GM12878 (cell line): ENCODE measurements at regions of chr9 and their contacts with region 1.

Region 1: DNA sequence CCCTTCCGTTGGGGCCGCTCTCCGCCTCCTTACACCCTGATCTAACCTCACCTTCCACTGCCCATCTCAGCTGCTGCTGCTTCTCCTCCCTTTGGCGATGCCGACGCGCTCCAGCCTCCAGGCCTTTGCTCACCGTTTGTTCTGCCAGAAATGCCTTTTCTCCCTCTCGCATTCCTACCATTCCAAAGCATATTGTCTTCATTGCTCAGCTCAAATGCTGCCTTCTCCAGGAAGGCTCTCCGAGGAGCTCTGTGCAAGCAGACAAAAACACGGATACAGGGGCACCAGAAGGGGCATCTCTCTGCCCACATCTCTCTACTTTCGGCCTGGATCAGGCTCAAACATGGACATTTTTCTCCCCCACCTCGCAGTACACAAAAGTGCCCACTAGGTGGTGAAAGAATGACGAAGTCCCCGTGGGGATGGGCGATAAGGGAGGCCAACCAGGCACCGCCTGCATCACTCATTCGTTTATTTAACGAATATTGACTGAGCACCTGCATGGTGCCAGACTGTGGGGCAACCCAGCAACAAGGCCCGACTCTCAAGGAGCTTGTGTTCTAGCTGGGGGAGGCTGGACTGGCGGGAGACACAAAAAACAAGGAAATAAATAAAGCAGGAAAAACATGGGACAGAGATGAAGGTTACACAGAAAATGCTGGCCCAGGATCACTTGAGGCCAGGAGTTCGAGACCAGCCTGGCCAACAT is 7.3 kb upstream of the GRHPR start:
- DNase-seq: no peak
- ATAC-seq: peak; percentile 50
- H3K4me3 ChIP-seq: no peak overlapping the region
- H3K27ac ChIP-seq: peak overlapping the region; percentile 45
- H3K4me1 ChIP-seq: peaks cover 46% of the 10 kb centered on the region
- H3K27me3 ChIP-seq: no peaks in the 10 kb centered on the region
- CTCF ChIP-seq: peak; percentile 82 to 89 (median 88)
- EP300 ChIP-seq: no peak
- POLR2A ChIP-seq: no peak
- RAD21 ChIP-seq: peak; percentile 80

Region 2: DNA sequence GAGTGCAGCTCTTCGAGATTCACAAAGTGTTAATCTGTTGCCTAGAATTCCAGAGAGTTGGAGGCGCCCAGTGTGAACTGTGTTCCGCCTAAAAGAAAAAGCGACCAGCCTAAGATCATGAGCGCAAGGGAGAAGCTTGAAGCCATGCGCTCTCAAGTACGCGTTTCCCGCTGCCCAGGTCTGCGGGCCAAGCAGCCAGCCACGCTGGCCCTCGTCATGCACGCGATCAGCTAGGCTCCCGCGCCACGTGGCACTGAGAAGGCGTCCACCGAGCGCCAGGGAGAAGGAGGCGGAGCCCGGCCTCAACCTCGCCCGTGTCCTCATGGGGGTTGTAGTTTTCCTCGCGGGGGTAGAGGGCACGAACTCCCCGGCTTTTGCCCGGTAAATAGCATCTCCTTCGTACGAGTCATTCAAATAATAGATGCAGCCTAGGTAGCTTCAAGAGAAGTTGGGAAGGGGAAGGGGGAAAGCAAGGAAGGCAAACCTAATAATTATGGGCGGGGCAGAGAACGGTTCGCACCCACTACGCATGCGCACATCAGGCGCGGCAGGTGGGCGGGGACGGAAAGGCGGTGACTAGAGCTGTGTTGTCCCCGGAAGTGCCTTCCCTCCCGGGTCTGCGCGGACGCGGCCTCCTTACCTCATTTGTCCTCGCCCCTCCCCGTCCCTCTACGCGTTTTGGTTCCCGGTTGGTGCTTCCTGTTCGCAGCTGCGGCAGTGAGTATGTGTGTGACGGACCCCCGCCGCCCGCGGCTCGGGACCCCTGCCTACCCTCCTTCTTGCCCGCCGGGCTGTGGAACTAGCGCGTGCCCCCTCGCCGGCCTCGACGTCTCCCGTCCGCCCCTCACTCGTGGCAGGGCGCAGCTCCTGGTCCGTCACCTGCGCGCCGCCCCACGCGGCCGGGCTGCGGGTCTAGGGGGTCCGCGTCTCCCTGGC is 295.0 kb before region 1 on chr9 and contains the start of gene ZCCHC7:
- CTCF ChIA-PET with region 1: no interaction called
- POLR2A ChIA-PET with region 1: no interaction called
- RAD21 ChIA-PET with region 1: interaction called, 10 read pairs
- SMC1A ChIA-PET with region 1: interaction called, 3 read pairs
- in situ Hi-C with region 1: no loop called
- intact Hi-C with region 1: no loop called
- DNase-seq: peak; percentile 89
- ATAC-seq: peak; percentile 94
- H3K4me3 ChIP-seq: peak within 1 kb of the TSS; percentile 93
- H3K27ac ChIP-seq: peak within 1 kb of the TSS; percentile 93
- H3K4me1 ChIP-seq: peaks cover 8% of the 10 kb centered on the region
- H3K27me3 ChIP-seq: no peaks in the 10 kb centered on the region
- CTCF ChIP-seq: no peak
- EP300 ChIP-seq: no peak
- POLR2A ChIP-seq: peak; percentile 92
- RAD21 ChIP-seq: no peak
- polyA plus RNA-seq, gene ZCCHC7: 58.6 to 60.8 TPM

Region 3: GRCh38 chr9:37324261-37324683 is 90.9 kb before region 1 on chr9:
- CTCF ChIA-PET with region 1: interaction called, 20 read pairs
- POLR2A ChIA-PET with region 1: interaction called, 3 read pairs
- RAD21 ChIA-PET with region 1: interaction called, 11 read pairs
- SMC1A ChIA-PET with region 1: interaction called, 16 read pairs
- in situ Hi-C with region 1: no loop called
- intact Hi-C with region 1: no loop called
- DNase-seq: peak; percentile 43
- ATAC-seq: peak; percentile 76
- H3K4me3 ChIP-seq: peak overlapping the region; percentile 18
- H3K27ac ChIP-seq: peak overlapping the region; percentile 93
- H3K4me1 ChIP-seq: peaks cover 30% of the 10 kb centered on the region
- H3K27me3 ChIP-seq: no peaks in the 10 kb centered on the region
- CTCF ChIP-seq: no peak
- EP300 ChIP-seq: no peak
- POLR2A ChIP-seq: 0 out of 2 replicates have a peak, but pooled peaks have one; percentile 48
- RAD21 ChIP-seq: no peak

Region 4: GRCh38 chr9:37382161-37382981 is 32.8 kb before region 1 on chr9:
- CTCF ChIA-PET with region 1: interaction called, 220 read pairs
- POLR2A ChIA-PET with region 1: interaction called, 212 read pairs
- RAD21 ChIA-PET with region 1: interaction called, 24 read pairs
- SMC1A ChIA-PET with region 1: interaction called, 10 read pairs
- in situ Hi-C with region 1: no loop called
- intact Hi-C with region 1: no loop called
- DNase-seq: peak; percentile 70
- ATAC-seq: peak; percentile 57
- H3K4me3 ChIP-seq: no peak overlapping the region
- H3K27ac ChIP-seq: peak overlapping the region; percentile 92
- H3K4me1 ChIP-seq: peaks cover 65% of the 10 kb centered on the region
- H3K27me3 ChIP-seq: no peaks in the 10 kb centered on the region
- CTCF ChIP-seq: no peak
- EP300 ChIP-seq: peak; percentile 75 to 80
- POLR2A ChIP-seq: no peak
- RAD21 ChIP-seq: peak; percentile 9; the same call in 1 of the 2 replicates

Region 5: DNA sequence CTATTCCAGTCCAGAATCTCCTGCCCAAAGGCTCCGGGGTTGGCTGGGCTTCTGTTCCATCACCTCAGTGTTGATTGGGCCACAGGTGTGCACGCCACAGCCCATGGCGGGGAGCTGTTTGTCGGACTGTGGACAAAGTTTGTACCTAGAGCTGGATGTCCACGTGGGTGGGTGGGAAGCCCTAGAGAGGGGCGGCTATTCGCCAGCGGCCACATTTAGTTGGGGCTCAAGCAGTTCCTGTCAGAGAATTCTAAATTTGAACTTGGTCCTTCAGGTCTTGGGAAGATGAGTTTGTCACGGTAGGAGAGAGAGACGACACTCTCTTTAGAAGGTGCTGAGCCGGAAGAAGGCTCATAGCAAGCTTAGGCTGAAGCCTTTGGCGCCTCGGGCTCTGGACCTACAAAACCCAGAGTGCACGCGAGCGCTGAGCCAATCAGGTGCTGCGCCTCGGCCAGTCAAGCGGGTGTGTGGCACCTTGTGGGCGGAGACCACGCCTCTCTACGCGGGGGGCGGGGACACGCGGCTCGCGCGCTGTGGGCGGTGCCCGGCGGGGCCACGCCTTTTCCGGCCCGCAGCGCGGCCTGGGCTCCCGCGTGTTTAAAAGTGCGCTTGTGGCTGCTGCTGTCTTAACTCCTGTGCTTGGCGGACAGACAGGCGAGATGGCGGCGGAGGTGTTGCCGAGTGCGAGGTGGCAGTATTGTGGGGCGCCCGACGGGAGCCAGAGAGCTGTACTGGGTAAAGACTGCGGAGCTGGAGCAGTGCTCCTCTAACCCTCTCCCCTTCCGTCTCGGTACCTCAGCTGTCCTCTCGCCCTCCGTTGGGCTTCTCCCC is 70.4 kb after region 1 on chr9 and contains the start of gene POLR1E:
- CTCF ChIA-PET with region 1: interaction called, 12 read pairs
- POLR2A ChIA-PET with region 1: interaction called, 4 read pairs
- RAD21 ChIA-PET with region 1: interaction called, 5 read pairs
- SMC1A ChIA-PET with region 1: interaction called, 5 read pairs
- in situ Hi-C with region 1: no loop called
- intact Hi-C with region 1: no loop called
- DNase-seq: peak; percentile 85
- ATAC-seq: peak; percentile 95
- H3K4me3 ChIP-seq: peak within 1 kb of the TSS; percentile 100
- H3K27ac ChIP-seq: peak within 1 kb of the TSS; percentile 71
- H3K4me1 ChIP-seq: peaks cover 14% of the 10 kb centered on the region
- H3K27me3 ChIP-seq: 0 out of 4 replicates have a peak, but pooled peaks cover 0 to 2% of the 10 kb centered on the region in 2 experiments
- CTCF ChIP-seq: no peak
- EP300 ChIP-seq: no peak; a peak in 1 of 4 replicates
- POLR2A ChIP-seq: peak; percentile 99
- RAD21 ChIP-seq: no peak
- polyA plus RNA-seq, gene POLR1E: 13.7 to 27.6 TPM

Region 6: GRCh38 chr9:38068866-38069629 is 653.9 kb after region 1 on chr9 and contains the start of gene SHB:
- CTCF ChIA-PET with region 1: no interaction called
- POLR2A ChIA-PET with region 1: no interaction called
- RAD21 ChIA-PET with region 1: no interaction called
- SMC1A ChIA-PET with region 1: no interaction called
- in situ Hi-C with region 1: no loop called
- intact Hi-C with region 1: no loop called
- DNase-seq: no peak
- ATAC-seq: peak; percentile 67
- H3K4me3 ChIP-seq: peak within 1 kb of the TSS; percentile 90
- H3K27ac ChIP-seq: no peak within 1 kb of the TSS
- H3K4me1 ChIP-seq: peaks cover 28% of the 10 kb centered on the region
- H3K27me3 ChIP-seq: peaks cover 2 to 9% of the 10 kb centered on the region in 2 experiments; a peak in 3 of 4 replicates
- CTCF ChIP-seq: no peak
- EP300 ChIP-seq: no peak
- POLR2A ChIP-seq: peak; percentile 80
- RAD21 ChIP-seq: no peak
- polyA plus RNA-seq, gene SHB: 0.56 to 0.69 TPM